Panc1 (cell line): ENCODE measurements at regions of chr5 and their contacts with region 1.

Region 1: DNA sequence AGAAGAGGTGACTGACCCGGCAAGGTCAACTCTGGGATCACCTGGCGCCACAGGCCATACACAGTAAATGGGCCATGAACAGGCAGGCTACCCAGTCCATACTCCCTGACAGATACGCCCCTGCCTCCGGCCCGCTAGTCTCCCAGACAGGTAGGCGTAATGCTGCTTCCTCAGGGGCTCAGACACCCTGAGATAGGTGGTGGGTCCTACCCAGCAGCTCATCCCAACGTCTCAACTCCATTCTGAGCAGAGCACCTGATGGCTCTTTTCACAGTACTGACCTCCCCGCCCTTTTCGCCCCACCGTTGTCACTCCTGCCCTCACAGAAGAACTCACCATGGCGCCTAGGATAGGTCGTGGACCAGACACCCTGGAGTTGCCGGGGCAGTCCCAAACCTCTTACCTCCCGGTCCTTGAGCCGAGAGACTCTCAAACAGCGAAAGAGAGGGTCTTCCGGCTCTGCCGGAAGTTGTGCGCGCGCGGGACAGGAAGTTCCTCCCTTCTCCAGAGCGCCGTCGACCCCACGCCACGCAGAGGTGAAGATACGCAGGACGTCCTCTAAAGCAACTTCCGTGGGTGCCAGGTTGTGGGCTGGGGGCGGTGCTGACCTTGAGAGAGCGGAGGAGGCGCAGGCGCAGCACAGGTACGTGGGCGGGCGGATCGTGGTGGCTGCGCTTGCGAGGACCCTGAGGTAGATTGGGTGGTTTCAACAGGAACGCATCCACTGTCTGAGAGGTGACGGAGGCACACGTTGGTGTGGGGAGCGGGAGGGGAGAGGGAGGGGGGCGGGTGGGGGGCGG is at the start of gene TMEM161B:
- DNase-seq: peak; percentile 53
- ATAC-seq: peak; percentile 100
- H3K4me3 ChIP-seq: peak within 1 kb of the TSS; percentile 99
- H3K27ac ChIP-seq: peak within 1 kb of the TSS; percentile 97
- H3K4me1 ChIP-seq: peaks cover 21% of the 10 kb centered on the region
- H3K27me3 ChIP-seq: no peaks in the 10 kb centered on the region
- CTCF ChIP-seq: no peak
- total RNA-seq, gene TMEM161B: 16.3 TPM

Region 2: GRCh38 chr5:88140856-88141752 is 127.5 kb before region 1 on chr5:
- CTCF ChIA-PET with region 1: no interaction called
- POLR2A ChIA-PET with region 1: interaction called, 3 read pairs
- in situ Hi-C with region 1: no loop called
- intact Hi-C with region 1: loop called (anchors 5 kb)
- DNase-seq: peak; percentile 82
- ATAC-seq: peak; percentile 95
- H3K4me3 ChIP-seq: peak overlapping the region; percentile 67 to 89
- H3K27ac ChIP-seq: peak overlapping the region; percentile 53
- H3K4me1 ChIP-seq: peaks cover 19% of the 10 kb centered on the region
- H3K27me3 ChIP-seq: peaks cover 19% of the 10 kb centered on the region
- CTCF ChIP-seq: peak; percentile 86

Region 3: DNA sequence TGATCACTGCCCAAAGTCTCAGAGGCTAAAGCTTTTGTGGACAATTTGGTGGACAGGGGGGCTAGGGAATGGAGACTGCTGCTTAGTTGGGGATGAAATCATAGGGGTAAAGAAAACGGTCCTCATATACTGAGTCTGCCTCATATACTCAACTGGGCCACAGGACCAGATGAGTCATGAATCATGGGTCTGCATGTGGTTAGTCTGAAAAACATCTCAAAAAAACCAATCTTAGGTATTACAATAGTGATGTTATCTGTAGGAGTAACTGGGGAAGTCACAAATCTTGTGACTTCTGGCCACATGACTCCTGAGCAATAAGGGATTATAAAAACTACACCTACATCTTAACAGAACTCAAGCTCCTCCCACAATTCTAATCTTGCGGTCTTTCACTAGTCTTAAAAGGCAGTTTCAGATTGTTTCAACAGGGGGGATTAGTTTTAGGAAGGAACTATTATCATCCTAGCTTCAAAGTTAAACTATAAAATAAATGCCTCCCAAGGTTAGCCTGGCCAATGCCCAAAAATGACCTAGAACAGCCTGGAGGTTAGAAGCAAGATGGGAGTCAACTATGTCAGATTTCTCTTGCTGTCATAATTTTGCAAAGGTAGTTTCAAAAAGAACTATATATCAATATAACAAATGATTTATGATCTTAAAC is 17.4 kb before region 1 on chr5:
- CTCF ChIA-PET with region 1: no interaction called
- POLR2A ChIA-PET with region 1: no interaction called
- in situ Hi-C with region 1: no loop called
- intact Hi-C with region 1: no loop called
- DNase-seq: no peak
- ATAC-seq: no peak
- H3K4me3 ChIP-seq: no peak overlapping the region
- H3K27ac ChIP-seq: no peak overlapping the region
- H3K4me1 ChIP-seq: no peaks in the 10 kb centered on the region
- H3K27me3 ChIP-seq: no peaks in the 10 kb centered on the region
- CTCF ChIP-seq: no peak

Region 4: GRCh38 chr5:88674356-88675167 is 406.0 kb after region 1 on chr5:
- CTCF ChIA-PET with region 1: no interaction called
- POLR2A ChIA-PET with region 1: no interaction called
- in situ Hi-C with region 1: no loop called
- intact Hi-C with region 1: loop called (anchors 5 kb)
- DNase-seq: no peak
- ATAC-seq: peak; percentile 83
- H3K4me3 ChIP-seq: peak overlapping the region; percentile 67 to 80
- H3K27ac ChIP-seq: peak overlapping the region; percentile 92
- H3K4me1 ChIP-seq: peaks cover 22% of the 10 kb centered on the region
- H3K27me3 ChIP-seq: no peaks in the 10 kb centered on the region
- CTCF ChIP-seq: no peak